Thyroid gland (tissue), 4 donors: ENCODE measurements at regions of chr9 and their contacts with region 1.

Region 1: DNA sequence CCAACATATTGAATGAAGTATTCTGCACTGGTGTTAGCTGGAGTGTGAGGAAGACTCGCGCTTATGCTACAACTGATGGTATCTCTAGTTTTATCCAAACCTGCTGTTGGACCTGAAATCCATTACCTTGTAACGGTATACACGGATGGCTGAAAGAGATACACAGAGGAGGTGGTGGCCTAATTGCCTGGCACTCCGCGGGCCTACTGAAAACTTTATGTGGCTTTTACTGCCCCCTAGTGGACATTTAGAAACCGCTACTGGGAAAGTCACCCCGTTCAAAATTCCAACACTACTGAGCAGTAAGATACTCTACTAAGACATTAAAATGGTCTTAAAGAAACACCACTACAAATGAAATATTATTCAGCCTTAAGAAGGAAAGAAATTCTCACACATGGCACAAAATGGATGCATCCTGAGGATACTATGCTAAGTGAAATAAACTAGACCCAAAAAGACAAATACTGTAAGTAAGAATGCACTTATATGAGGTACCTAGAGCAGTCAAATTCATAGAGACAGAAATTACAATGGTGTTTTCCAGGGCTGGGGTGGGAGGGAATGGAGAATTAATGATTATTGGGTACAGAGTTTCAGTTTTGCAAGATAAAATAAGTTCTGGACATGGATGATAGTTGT is 100.4 kb downstream of the TTLL11 start:
- DNase-seq: peak; percentile 65 to 73
- H3K4me3 ChIP-seq: no peak overlapping the region
- H3K27ac ChIP-seq: no peak overlapping the region
- H3K4me1 ChIP-seq: peaks cover 7 to 12% of the 10 kb centered on the region in 2 donors
- H3K27me3 ChIP-seq: no peaks in the 10 kb centered on the region
- CTCF ChIP-seq: peak; percentile 56 to 83 (median 71)
- POLR2A ChIP-seq: no peak

Region 2: DNA sequence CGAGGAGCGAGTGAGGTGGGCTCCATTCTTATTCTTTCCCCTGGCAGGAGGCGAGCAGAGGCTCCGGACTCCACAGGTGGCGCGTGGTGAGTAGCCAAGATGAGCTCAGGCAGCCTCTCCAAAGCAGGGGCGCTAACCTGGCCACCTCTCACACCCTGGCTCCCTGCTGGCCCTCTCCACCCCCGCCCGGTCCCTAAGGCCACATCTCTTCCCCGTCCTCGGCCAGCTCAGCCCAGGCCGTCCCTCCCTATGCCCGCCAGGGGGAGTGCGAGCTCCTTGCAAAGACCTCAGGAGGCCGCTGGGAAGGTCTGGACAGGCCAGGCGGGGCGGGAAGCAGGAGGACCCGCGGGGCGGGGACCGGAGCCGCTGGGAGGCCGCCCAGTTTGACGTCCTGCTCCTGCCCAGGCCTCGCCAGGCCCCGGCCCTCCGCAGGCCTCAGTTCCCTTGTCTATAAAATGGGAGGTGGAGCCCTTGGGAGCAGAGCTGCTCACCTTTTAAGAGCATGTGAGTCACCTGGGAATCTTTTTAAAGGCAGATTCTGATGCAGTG is 446.7 kb before region 1 on chr9:
- intact Hi-C with region 1: loop called (anchors 5 kb)
- DNase-seq: peak; percentile 98 to 99
- H3K4me3 ChIP-seq: peak overlapping the region in 1 of 3 donors; percentile 17
- H3K27ac ChIP-seq: no peak overlapping the region
- H3K4me1 ChIP-seq: peaks cover 0 to 18% of the 10 kb centered on the region in 2 donors
- H3K27me3 ChIP-seq: no peaks in the 10 kb centered on the region
- CTCF ChIP-seq: peak; percentile 81 to 99 (median 92)
- POLR2A ChIP-seq: peak in 1 of 2 donors; percentile 27

Region 3: GRCh38 chr9:121634329-121635261 is 358.1 kb before region 1 on chr9:
- intact Hi-C with region 1: loop called (anchors 10 kb)
- DNase-seq: peak; percentile 40 to 44
- H3K4me3 ChIP-seq: no peak overlapping the region
- H3K27ac ChIP-seq: no peak overlapping the region
- H3K4me1 ChIP-seq: peaks cover 16 to 48% of the 10 kb centered on the region in 2 donors
- H3K27me3 ChIP-seq: no peaks in the 10 kb centered on the region
- CTCF ChIP-seq: peak in 5 of 6 experiments; percentile 15 to 59 (median 56)
- POLR2A ChIP-seq: no peak